Right cardiac atrium (tissue), 5 donors: ENCODE measurements at regions of chr17 and their contacts with region 1.

Region 1: GRCh38 chr17:16465861-16466338 is 26.1 kb downstream of the LRRC75A start:
- DNase-seq: peak; percentile 67 to 79 (median 77)
- ATAC-seq: peak; percentile 54 to 86
- H3K4me3 ChIP-seq: no peak overlapping the region
- H3K27ac ChIP-seq: no peak overlapping the region
- H3K4me1 ChIP-seq: peaks cover 10% of the 10 kb centered on the region
- H3K27me3 ChIP-seq: no peaks in the 10 kb centered on the region

Region 2: GRCh38 chr17:16068323-16068722 is 397.6 kb before region 1 on chr17:
- intact Hi-C with region 1: no loop called
- DNase-seq: no peak
- ATAC-seq: no peak
- H3K4me3 ChIP-seq: no peak overlapping the region
- H3K27ac ChIP-seq: no peak overlapping the region
- H3K4me1 ChIP-seq: no peaks in the 10 kb centered on the region
- H3K27me3 ChIP-seq: no peaks in the 10 kb centered on the region

Region 3: GRCh38 chr17:16512011-16512410 is 46.1 kb after region 1 on chr17:
- intact Hi-C with region 1: loop called in 1 of 4 experiments (anchors 5 kb)
- DNase-seq: no peak
- ATAC-seq: no peak
- H3K4me3 ChIP-seq: no peak overlapping the region
- H3K27ac ChIP-seq: no peak overlapping the region
- H3K4me1 ChIP-seq: no peaks in the 10 kb centered on the region
- H3K27me3 ChIP-seq: no peaks in the 10 kb centered on the region